Activated T-helper 1 cell treated with anti-CD3 and anti-CD28 coated beads, Interleukin-12 subunit alpha, Interleukin-12 subunit beta, Interleukin-2, Interleukin-4 antibody, amounts not matched to agents 30 ng/mL and 10 ng/mL and 1 ng/mL, durations not matched to agents 14 hours and 24 hours and 36 hours (primary cell): ENCODE measurements at regions of chr22 and their contacts with region 1.

Region 1: GRCh38 chr22:41091132-41092022 is 1.0 kb upstream of the EP300 start:
- DNase-seq: peak; percentile 98
- H3K4me3 Mint-ChIP-seq: peak overlapping the region; percentile 100
- H3K27ac Mint-ChIP-seq: peak overlapping the region; percentile 100
- H3K4me1 Mint-ChIP-seq: peaks cover 30% of the 10 kb centered on the region
- H3K27me3 Mint-ChIP-seq: peaks cover 2% of the 10 kb centered on the region

Region 2: DNA sequence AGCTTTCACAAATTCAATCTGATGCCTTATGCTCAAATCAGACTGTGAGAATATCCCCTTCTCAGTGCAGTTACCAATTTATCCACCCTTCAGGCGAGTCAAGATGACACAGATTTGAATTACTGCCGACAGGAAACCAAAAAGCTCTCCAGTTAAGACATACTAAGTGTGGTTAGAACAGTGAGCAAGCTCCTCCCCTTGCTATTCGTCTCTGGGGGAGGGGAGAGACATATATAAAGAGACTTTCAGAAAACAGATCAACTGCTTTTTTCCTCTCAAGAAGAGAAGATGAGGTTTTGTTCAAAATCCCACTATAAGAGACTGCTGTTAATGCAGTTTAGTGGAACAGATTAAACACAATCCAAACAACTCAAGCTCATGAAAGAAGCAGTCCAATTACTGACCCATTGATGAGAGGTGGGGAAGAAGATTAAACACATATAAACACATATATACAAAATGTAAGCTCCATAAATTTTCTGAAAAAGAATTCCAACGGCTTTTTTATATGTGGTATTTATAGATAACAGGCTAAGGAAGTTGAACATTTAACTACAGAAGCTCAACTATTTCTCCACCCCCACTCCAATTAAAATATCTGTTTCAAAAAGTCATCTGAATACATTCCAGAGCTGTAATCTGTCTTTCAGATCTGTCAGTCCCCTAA is 557.5 kb before region 1 on chr22:
- intact Hi-C with region 1: loop called (anchors 2 kb)
- DNase-seq: peak; percentile 53
- H3K4me3 Mint-ChIP-seq: peak overlapping the region; percentile 84
- H3K27ac Mint-ChIP-seq: peak overlapping the region; percentile 82
- H3K4me1 Mint-ChIP-seq: peaks cover 62% of the 10 kb centered on the region
- H3K27me3 Mint-ChIP-seq: no peaks in the 10 kb centered on the region

Region 3: DNA sequence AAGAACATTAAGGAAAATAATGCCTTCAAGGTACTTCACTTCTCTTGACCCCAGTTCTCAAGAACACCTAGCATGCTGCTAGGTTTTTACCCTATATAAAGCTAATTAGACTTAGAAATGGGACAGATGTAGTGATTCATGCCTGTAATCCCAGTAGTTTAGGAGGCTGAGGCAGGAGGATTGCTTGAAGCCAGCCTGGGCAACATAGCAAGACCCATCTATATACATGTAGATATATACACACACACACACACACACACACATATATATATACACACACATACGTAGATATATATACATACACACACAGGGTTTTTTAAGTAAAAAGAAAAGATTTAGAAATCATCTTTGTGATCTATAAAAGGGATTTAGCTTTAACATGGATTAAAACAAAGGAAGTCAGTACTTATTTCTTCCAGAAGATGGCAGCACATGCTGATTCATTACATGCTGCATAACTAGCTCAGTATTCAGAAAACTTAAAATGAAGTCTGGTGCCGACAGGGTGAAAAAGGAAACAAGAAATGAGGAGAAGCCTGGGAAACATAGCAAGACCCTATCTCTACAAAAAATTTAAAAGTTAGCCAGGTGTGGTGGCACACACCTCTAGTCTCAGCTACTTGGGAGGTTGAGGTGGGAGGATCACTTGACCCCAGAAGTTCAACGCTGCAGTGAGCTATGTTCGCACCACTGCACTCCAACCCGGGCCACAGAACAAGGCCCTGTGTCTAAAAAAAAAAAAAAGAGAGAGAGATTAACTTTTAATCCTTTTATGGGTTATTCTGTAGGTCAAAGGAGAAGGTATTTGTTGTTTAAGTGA is 168.7 kb before region 1 on chr22:
- intact Hi-C with region 1: loop called (anchors 1 kb)
- DNase-seq: peak; percentile 8
- H3K4me3 Mint-ChIP-seq: peak overlapping the region; percentile 4
- H3K27ac Mint-ChIP-seq: peak overlapping the region; percentile 5
- H3K4me1 Mint-ChIP-seq: peaks cover 8% of the 10 kb centered on the region
- H3K27me3 Mint-ChIP-seq: no peaks in the 10 kb centered on the region

Region 4: GRCh38 chr22:41070665-41071331 is 20.6 kb before region 1 on chr22:
- intact Hi-C with region 1: loop called (anchors 1 kb)
- DNase-seq: no peak
- H3K4me3 Mint-ChIP-seq: no peak overlapping the region
- H3K27ac Mint-ChIP-seq: no peak overlapping the region
- H3K4me1 Mint-ChIP-seq: peaks cover 8% of the 10 kb centered on the region
- H3K27me3 Mint-ChIP-seq: no peaks in the 10 kb centered on the region

Region 5: DNA sequence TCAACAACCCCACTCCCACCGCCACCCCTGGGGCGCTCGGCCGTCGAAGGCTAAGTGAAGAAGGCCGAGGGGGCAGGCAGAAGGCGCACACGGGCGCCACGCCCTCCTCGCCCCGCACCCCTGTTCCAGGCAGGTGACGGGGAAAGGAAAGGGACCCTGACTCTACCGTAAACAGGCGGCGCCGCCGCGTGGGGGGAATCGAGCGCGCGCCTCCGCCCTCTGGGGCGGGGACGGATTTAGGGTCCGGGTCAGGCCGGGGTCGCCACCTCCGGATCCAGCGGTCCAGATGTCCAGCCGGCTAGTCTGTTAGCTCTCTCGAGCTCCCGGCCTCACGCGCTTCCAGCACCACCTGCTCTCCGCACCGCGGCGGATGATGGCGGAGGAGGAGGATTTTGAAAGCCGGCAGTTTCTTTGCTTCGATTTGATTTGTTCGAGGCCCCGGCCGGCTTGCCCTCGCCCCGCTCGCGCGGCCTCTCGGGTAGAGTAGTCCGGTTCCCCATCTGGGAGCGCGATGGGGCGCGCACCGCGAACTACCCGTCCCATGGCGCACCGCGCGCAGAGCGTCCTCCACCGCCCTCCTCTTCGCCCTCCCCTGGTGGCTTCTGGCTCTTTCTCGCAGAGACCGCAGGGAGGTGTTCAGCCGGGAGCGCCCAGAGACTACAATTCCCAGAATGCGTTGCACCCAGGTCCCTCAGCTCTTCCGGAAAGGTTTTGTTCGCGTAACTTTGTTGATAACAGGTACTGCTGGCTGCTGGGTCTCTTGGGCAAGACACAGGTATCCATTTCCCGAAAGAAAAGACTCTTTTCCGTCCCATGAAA is 194.7 kb after region 1 on chr22 and contains the start of gene RANGAP1:
- intact Hi-C with region 1: loop called (anchors 1 kb)
- DNase-seq: peak; percentile 98
- H3K4me3 Mint-ChIP-seq: peak within 1 kb of the TSS; percentile 95
- H3K27ac Mint-ChIP-seq: peak within 1 kb of the TSS; percentile 97
- H3K4me1 Mint-ChIP-seq: peaks cover 34% of the 10 kb centered on the region
- H3K27me3 Mint-ChIP-seq: no peaks in the 10 kb centered on the region
- total RNA-seq, gene RANGAP1: 197 and 199 TPM in 2 replicates

Region 6: DNA sequence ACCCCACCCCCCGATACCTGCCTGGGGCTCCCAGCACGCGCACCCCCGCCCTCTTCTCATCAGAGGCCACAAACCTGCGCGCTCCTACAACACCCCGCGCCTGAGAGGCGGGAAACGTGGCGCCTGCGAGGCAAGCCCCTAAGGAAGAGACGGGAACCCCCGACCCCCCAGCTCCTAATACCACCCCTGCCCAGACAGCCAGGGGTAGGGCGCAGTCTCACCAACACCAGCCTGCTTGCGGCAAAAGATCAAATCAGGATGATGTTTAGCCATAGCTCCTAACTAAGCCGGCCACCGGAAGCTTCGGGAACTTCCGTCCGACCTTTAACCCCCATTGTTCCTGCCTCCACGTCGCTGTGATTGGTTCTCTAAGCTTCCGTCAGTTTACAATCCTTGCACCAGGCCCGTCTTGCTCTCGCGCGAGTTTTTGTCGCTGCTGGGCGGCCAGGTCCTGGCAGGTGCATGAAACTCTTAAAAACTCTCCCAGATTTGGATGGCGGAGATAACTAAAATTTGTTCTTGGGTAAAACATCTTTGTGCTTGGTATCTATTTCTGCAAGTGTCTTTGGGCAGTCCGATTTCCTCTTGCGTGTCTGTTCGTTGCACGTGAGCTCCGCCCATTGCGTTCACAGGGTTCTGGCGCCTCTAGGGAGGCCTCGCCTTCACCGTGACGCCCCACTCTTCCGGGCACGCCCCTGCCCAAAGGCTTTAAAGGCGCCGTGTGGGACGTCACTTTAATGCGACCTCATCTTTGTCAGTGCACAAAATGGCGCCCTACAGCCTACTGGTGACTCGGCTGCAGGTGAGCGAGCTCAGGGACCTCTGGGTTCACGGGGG is 377.2 kb after region 1 on chr22 and contains the starts of genes ACO2 and PHF5A:
- intact Hi-C with region 1: loop called (anchors 2 kb)
- DNase-seq: peak; percentile 98
- H3K4me3 Mint-ChIP-seq: peak within 1 kb of the TSS; percentile 87
- H3K27ac Mint-ChIP-seq: peak within 1 kb of the TSS; percentile 99
- H3K4me1 Mint-ChIP-seq: peaks cover 22% of the 10 kb centered on the region
- H3K27me3 Mint-ChIP-seq: no peaks in the 10 kb centered on the region
- total RNA-seq, gene ACO2: 99.1 and 101 TPM in 2 replicates
- total RNA-seq, gene PHF5A: 83.7 and 96.8 TPM in 2 replicates